ENCODE measurements at regions of chr3 and their contacts with region 1.

Region 1: DNA sequence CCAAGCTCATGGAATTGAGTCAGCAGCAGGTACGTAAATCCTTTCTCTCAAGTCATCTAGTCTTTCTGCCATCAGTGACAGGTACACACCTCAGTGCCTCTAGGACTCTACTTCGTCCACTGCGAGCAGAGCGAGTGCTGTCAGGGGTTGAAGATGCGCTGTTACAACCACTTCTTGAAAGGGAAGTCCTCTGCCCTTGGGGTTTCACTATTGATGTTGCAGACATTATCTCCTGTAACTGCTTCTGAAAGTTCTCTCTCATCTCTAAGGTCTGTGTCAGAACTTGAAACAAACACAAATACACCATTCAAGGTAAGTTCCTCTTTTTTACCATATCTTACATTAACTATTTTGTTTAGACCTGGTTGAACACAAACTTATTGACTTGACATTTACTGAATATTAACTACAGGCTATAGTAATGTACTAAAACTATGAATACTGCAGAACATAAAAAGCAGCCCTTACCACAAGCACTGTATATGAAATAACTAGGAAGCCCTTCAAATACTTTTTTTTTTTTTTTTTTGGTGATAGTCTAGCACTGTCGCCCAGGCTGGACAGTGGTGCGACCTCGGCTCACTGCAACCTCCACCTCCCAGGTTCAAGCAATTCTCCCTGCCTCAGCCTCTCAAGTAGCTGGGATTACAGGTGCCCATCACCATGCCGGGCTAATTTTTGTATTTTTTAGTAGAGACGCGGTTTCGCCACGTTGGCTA is 41.5 kb downstream of the TOPBP1 start:
- DNase-seq: no peak
- ATAC-seq: no peak
- H3K4me3 ChIP-seq: no peak overlapping the region
- H3K27ac ChIP-seq: no peak overlapping the region
- H3K4me1 ChIP-seq: no peaks in the 10 kb centered on the region
- H3K27me3 ChIP-seq: no peaks in the 10 kb centered on the region
- CTCF ChIP-seq: no peak
- POLR2A ChIP-seq: no peak

Region 2: GRCh38 chr3:132522353-132522752 is 1097.9 kb before region 1 on chr3:
- in situ Hi-C with region 1: loop called in 1 of 4 experiments (anchors 25 kb)
- intact Hi-C with region 1: no loop called
- DNase-seq: no peak
- ATAC-seq: no peak
- H3K4me3 ChIP-seq: no peak overlapping the region
- H3K27ac ChIP-seq: no peak overlapping the region
- H3K4me1 ChIP-seq: no peaks in the 10 kb centered on the region
- H3K27me3 ChIP-seq: no peaks in the 10 kb centered on the region
- CTCF ChIP-seq: no peak
- POLR2A ChIP-seq: no peak

Region 3: DNA sequence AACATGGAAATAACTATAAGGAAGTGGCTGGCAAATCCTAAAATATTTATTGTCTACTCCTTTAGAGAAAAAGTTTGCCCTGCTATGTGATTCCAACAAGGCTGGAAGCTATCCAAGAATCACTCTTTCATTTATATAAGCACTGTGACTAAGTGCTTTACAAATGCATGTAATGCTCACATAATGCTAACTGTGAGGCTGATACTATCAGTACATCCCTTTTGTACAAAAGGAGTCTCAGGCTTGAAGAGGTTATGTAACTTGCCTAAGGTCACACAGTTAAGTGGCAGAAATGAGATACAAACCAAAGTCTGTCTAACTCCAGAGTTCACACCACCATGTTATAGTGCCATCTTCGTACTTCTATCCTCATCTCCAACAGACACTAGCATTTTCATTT is 24.5 kb after region 1 on chr3:
- in situ Hi-C with region 1: no loop called
- intact Hi-C with region 1: loop called (anchors 1 kb)
- DNase-seq: no peak
- ATAC-seq: no peak
- H3K4me3 ChIP-seq: no peak overlapping the region
- H3K27ac ChIP-seq: no peak overlapping the region
- H3K4me1 ChIP-seq: no peaks in the 10 kb centered on the region
- H3K27me3 ChIP-seq: no peaks in the 10 kb centered on the region
- CTCF ChIP-seq: no peak
- POLR2A ChIP-seq: no peak

Region 4: DNA sequence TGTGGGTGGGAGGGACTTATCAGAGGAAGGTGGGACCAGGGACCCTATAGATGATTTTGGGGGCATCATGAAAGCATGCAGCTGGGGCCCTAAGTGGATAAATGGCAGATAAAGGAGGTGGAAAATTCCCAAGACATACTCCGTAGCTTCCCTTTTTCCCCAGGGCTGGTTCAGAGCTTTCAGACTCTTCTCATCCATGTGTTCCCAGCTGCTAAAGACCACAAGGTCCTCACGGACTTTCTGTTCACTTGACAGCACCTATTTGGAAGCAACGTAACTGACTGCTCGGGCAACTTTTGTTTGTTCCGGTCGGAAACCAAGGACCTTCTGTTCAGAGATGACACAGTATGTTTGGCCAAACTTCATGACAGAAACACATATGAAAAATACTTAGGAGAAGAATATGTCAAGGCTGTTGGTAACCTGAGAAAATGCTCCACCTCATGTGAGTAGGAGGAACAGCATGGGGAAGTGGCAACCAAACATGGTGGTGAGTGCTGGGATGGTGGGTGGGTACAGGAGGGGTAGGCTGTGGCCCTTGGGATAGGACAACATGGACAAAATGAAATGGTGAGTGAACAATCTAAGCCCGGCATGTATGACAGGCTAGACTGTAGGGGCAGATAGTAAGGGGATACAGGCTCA is 156.7 kb after region 1 on chr3:
- in situ Hi-C with region 1: no loop called
- intact Hi-C with region 1: no loop called
- DNase-seq: no peak
- ATAC-seq: no peak
- H3K4me3 ChIP-seq: no peak overlapping the region
- H3K27ac ChIP-seq: no peak overlapping the region
- H3K4me1 ChIP-seq: no peaks in the 10 kb centered on the region
- H3K27me3 ChIP-seq: no peaks in the 10 kb centered on the region
- CTCF ChIP-seq: no peak
- POLR2A ChIP-seq: no peak

Measured in gastrocnemius medialis (tissue), 4 donors.